ENCODE measurements at regions of chr5 and their contacts with region 1.

Region 1: GRCh38 chr5:155978850-155979249 is 348.1 kb upstream of the SGCD start:
- DNase-seq: no peak
- ATAC-seq: peak; percentile 79 to 94 (median 87)
- H3K4me3 ChIP-seq: no peak overlapping the region
- H3K27ac ChIP-seq: peak overlapping the region; percentile 71
- H3K4me1 ChIP-seq: peaks cover 24% of the 10 kb centered on the region
- H3K27me3 ChIP-seq: no peaks in the 10 kb centered on the region
- CTCF ChIP-seq: no peak

Region 2: DNA sequence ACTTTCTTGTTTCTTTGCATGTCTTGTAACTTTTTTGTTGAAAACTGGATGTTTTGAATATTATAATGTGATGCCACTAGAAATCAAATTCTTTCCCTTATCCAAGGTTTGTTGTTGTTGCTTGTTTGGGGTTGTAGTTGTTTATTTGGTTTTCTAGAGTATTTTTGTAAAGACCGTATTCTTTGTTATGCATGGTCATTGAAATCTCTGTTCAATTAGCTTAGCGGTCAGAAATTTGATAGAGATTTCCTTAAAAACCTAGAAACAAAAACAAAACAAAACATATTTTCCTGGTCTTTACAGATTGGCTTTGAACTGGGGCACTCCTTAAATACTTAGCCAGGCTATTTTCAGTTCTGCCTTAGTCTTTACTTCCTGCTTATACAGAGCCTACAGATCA is 1651.5 kb after region 1 on chr5:
- intact Hi-C with region 1: loop called in 1 of 2 experiments (anchors 10 kb)
- DNase-seq: no peak
- ATAC-seq: no peak
- H3K4me3 ChIP-seq: no peak overlapping the region
- H3K27ac ChIP-seq: no peak overlapping the region
- H3K4me1 ChIP-seq: no peaks in the 10 kb centered on the region
- H3K27me3 ChIP-seq: no peaks in the 10 kb centered on the region
- CTCF ChIP-seq: no peak

Measured in psoas muscle (tissue), 8 donors.